ENCODE measurements at regions of chrX and their contacts with region 1.

Region 1: GRCh38 chrX:130330706-130331105 is 9.0 kb upstream of the SLC25A14 start:
- DNase-seq: peak; percentile 50
- ATAC-seq: no peak
- H3K4me3 ChIP-seq: no peak overlapping the region
- H3K4me3 Mint-ChIP-seq: no peak overlapping the region
- H3K27ac ChIP-seq: no peak overlapping the region
- H3K27ac Mint-ChIP-seq: no peak overlapping the region
- H3K4me1 ChIP-seq: no peaks in the 10 kb centered on the region
- H3K4me1 Mint-ChIP-seq: no peaks in the 10 kb centered on the region
- H3K27me3 ChIP-seq: peaks cover 0 to 7% (median 3%) of the 10 kb centered on the region in 4 experiments
- H3K27me3 Mint-ChIP-seq: peaks cover 11% of the 10 kb centered on the region
- CTCF ChIP-seq: no peak

Region 2: DNA sequence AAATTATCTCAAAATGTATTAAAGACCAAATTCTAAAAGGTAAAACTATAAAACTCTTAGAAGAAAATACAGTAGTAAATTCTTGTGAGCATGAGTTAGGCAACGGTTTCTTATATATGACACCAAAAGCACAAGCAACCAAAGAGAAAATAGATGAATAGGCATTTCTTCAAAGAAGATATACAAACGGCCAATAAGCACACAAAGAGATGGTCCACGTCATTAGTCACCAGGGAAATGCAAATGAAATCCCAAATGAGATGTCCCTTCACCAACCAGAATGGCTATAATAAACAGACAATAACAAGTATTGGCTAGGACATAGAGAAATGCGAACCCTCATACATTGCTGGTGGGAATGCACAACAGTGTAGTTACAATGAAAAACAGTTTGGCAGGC is 114.4 kb before region 1 on chrX:
- CTCF ChIA-PET with region 1: no interaction called
- POLR2A ChIA-PET with region 1: no interaction called
- intact Hi-C with region 1: no loop called
- DNase-seq: peak; percentile 2
- ATAC-seq: no peak
- H3K4me3 ChIP-seq: no peak overlapping the region
- H3K4me3 Mint-ChIP-seq: no peak overlapping the region
- H3K27ac ChIP-seq: no peak overlapping the region
- H3K27ac Mint-ChIP-seq: no peak overlapping the region
- H3K4me1 ChIP-seq: no peaks in the 10 kb centered on the region
- H3K4me1 Mint-ChIP-seq: no peaks in the 10 kb centered on the region
- H3K27me3 ChIP-seq: no peaks in the 10 kb centered on the region
- H3K27me3 Mint-ChIP-seq: no peaks in the 10 kb centered on the region
- CTCF ChIP-seq: no peak

Region 3: GRCh38 chrX:131633285-131633917 is 1302.7 kb after region 1 on chrX:
- CTCF ChIA-PET with region 1: no interaction called
- POLR2A ChIA-PET with region 1: no interaction called
- intact Hi-C with region 1: loop called (anchors 5 kb)
- DNase-seq: peak; percentile 35
- ATAC-seq: no peak
- H3K4me3 ChIP-seq: no peak overlapping the region
- H3K4me3 Mint-ChIP-seq: no peak overlapping the region
- H3K27ac ChIP-seq: no peak overlapping the region
- H3K27ac Mint-ChIP-seq: no peak overlapping the region
- H3K4me1 ChIP-seq: no peaks in the 10 kb centered on the region
- H3K4me1 Mint-ChIP-seq: no peaks in the 10 kb centered on the region
- H3K27me3 ChIP-seq: no peaks in the 10 kb centered on the region
- H3K27me3 Mint-ChIP-seq: no peaks in the 10 kb centered on the region
- CTCF ChIP-seq: peak; percentile 72